ENCODE measurements at regions of chr18 and their contacts with region 1.

Region 1: DNA sequence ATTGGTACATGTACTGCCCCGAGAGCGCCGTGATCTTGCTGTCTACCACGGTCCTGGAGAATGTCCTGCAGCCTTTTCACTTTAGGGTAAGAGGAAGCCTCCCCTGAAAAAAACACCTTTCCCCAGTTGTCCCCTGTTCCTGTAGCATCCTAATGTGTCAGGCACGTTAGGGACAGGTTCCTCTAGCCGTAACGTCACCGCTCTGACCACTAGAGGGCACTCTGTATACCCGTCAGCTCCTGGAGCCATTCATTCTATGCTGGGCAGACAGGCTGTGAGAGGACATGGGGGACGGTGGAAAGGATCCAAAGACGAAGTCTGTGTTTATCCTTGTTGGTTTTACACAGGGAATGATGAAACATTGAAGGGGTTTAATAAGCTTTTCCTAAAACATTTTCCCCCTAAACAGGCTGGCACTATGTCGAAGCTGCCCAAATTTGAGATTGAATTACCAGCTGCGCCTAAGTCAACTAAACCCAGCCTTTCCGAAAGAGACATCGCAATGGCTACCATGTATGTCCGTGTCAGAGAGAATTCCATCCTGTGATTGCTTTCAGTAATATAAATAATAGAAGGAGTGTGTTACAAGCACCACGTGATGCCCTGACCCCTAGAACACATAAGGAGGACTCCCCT is 12.7 kb downstream of the RMC1 start:
- DNase-seq: peak; percentile 81
- H3K4me3 ChIP-seq: no peak overlapping the region
- H3K27ac ChIP-seq: no peak overlapping the region
- H3K4me1 ChIP-seq: no peaks in the 10 kb centered on the region
- H3K27me3 ChIP-seq: no peaks in the 10 kb centered on the region
- CTCF ChIP-seq: peak; percentile 54 to 81 (median 78)
- POLR2A ChIP-seq: no peak

Region 2: DNA sequence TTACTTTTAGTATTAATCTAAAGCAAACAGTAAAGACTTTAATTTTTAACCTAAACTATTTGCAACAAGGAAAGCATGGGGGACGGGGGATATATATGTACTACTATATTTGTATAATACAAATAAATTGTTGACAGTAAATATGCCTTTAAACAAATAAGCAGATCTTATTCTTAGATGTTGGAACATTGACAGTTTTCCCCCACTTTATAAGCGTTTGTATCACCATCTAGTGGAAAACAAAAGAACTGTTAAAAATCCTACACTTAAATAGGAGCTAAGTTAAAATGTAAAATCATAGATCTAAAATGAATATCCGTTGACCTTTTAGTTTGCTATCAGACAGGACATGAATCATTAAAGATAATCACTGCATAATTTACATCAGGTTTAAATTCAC is 532.9 kb before region 1 on chr18:
- intact Hi-C with region 1: no loop called
- DNase-seq: no peak
- H3K4me3 ChIP-seq: no peak overlapping the region
- H3K27ac ChIP-seq: no peak overlapping the region
- H3K4me1 ChIP-seq: no peaks in the 10 kb centered on the region
- H3K27me3 ChIP-seq: no peaks in the 10 kb centered on the region
- CTCF ChIP-seq: peak in 3 of 4 experiments; percentile 49 to 66 (median 66)
- POLR2A ChIP-seq: no peak

Region 3: DNA sequence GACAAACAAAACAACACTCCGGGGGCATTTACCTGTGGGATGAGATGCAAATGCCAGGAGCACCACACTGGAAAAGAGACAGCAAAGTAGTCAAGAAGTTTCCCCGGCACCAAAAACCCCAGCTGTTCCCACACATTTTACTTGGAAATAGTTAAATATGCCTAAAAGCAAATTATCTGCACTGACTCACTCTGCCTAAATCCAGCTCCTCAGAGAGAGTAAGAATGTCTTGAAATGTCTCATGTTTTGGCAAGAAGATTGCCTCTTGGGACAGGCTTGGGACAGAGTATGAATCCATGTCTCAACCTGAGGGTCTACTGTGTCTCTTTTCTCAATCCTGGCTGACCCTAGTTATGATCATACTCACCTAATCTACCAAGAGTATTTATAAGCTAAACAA is 150.4 kb before region 1 on chr18:
- intact Hi-C with region 1: no loop called
- DNase-seq: no peak
- H3K4me3 ChIP-seq: no peak overlapping the region
- H3K27ac ChIP-seq: no peak overlapping the region
- H3K4me1 ChIP-seq: no peaks in the 10 kb centered on the region
- H3K27me3 ChIP-seq: no peaks in the 10 kb centered on the region
- CTCF ChIP-seq: no peak
- POLR2A ChIP-seq: no peak

Region 4: DNA sequence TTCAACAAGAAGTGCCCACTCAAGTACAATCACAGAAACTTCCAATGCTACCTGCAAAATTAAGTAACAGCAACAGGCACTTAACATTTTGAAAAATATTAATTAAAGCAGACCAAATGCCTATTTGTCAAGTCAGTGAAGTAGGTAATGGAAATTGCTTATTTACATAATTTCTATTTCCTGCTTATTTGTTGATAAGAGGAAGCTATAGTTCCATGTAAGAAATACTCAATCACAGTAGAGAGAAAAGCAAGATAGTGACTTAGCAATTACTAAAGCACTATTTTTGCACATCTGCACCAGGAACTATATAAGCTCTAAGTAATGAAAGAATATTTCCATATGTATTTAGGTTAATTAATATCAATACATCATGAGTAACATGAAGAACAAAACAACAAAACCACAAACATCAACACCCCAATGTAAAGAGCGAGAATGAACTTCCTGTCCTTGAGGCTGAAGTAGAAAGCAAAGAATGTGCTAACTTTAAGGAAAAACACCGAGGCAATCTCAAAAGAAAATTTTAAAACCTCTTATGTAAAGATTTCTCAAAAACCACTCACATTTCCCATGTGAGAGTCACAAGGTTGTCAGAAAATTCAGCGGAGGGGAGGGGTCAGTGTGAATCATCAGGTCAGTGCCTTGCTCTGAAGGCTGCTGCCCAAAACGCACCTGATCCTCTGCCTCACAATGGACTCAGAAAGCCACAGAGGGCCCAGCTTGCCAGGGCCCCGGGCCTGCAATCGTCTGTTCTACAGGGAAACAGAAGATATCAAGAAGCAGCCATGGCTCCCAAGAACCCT is 57.8 kb after region 1 on chr18:
- intact Hi-C with region 1: no loop called
- DNase-seq: no peak
- H3K4me3 ChIP-seq: no peak overlapping the region
- H3K27ac ChIP-seq: peak overlapping the region in 1 of 2 donors; percentile 19
- H3K4me1 ChIP-seq: no peaks in the 10 kb centered on the region
- H3K27me3 ChIP-seq: no peaks in the 10 kb centered on the region
- CTCF ChIP-seq: no peak
- POLR2A ChIP-seq: no peak

Region 5: GRCh38 chr18:23586249-23587196 is 70.5 kb after region 1 on chr18 and contains the start of gene NPC1:
- intact Hi-C with region 1: loop called (anchors 1 kb)
- DNase-seq: peak; percentile 91
- H3K4me3 ChIP-seq: peak within 1 kb of the TSS; percentile 79 to 92
- H3K27ac ChIP-seq: peak within 1 kb of the TSS; percentile 100
- H3K4me1 ChIP-seq: no peaks in the 10 kb centered on the region
- H3K27me3 ChIP-seq: no peaks in the 10 kb centered on the region
- CTCF ChIP-seq: peak; percentile 94 to 97 (median 96)
- POLR2A ChIP-seq: peak; percentile 85
- total RNA-seq, gene NPC1: 32.0 to 63.5 TPM

Region 6: DNA sequence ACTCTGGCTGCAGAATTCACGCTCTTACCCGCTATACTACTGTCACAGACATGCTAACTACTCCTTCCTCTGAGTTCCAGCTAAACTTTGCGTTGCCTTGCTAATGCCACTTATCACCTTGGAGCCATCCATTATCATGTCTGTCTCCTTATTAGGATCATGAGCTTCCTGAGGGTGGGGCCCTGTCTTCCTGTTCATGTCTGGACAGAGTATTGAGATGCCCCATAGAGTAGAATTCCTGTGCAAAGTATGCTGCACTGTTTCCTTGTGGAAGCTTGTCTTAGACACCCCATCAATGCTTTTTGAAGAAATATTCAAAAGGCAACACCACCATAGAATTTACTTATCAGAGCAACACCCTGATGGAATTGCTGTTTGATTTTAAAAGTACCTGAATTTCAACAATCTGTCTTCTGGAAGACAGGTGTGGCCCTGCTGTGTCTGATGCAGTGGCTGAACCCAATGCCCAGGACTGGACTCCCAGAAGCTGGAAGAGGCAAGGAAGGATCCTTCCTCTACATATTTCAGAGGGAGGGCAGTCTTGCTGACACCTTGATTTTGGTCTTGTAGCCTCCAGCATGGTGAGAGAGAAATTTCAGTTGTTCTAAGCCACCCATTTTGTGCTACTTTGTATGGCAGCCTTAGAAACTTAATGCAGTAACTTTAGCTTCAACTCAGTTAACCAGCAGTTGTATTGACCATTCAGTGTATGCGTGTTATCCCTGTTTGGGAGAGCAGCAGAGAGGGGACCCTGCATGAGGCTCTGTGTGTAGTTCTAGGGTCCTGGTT is 178.8 kb after region 1 on chr18:
- intact Hi-C with region 1: loop called (anchors 5 kb)
- DNase-seq: no peak
- H3K4me3 ChIP-seq: no peak overlapping the region
- H3K27ac ChIP-seq: no peak overlapping the region
- H3K4me1 ChIP-seq: no peaks in the 10 kb centered on the region
- H3K27me3 ChIP-seq: no peaks in the 10 kb centered on the region
- CTCF ChIP-seq: no peak
- POLR2A ChIP-seq: no peak

Region 7: GRCh38 chr18:23812546-23813440 is 296.8 kb after region 1 on chr18:
- intact Hi-C with region 1: loop called (anchors 5 kb)
- DNase-seq: no peak
- H3K4me3 ChIP-seq: no peak overlapping the region
- H3K27ac ChIP-seq: no peak overlapping the region
- H3K4me1 ChIP-seq: no peaks in the 10 kb centered on the region
- H3K27me3 ChIP-seq: no peaks in the 10 kb centered on the region
- CTCF ChIP-seq: peak; percentile 14 to 65 (median 52)
- POLR2A ChIP-seq: no peak